ENCODE measurements at regions of chr1 and their contacts with region 1.

Region 1: DNA sequence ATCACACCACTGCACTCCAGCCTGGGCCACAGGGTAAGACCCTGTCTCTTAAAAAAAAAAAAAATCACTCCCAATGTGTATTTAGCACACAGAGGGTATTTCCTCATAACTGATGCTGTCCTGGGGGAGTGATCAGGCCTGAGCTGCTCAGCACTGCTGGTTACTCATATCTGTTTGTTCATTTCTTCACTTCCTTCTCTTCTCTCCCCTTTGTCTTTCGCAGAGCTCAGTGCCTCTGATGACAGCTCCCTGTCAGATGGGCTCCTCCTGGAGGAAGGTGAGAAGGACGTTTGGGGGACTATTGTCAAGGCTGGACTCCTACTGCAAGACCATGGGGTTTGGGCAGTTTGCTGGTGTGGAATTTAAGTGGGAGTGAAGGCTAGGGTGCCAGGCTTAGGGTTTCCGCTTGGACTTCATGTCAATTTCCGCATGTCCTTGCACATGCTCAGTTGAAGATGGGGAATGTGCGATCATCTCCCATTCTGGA is 13.0 kb downstream of the INAVA start:
- DNase-seq: no peak
- H3K4me3 Mint-ChIP-seq: no peak overlapping the region
- H3K27ac Mint-ChIP-seq: no peak overlapping the region
- H3K4me1 Mint-ChIP-seq: peaks cover 10% of the 10 kb centered on the region
- H3K27me3 Mint-ChIP-seq: peaks cover 29% of the 10 kb centered on the region

Region 2: GRCh38 chr1:200866521-200866920 is 41.1 kb before region 1 on chr1:
- intact Hi-C with region 1: loop called (anchors 5 kb)
- DNase-seq: no peak
- H3K4me3 Mint-ChIP-seq: no peak overlapping the region
- H3K27ac Mint-ChIP-seq: no peak overlapping the region
- H3K4me1 Mint-ChIP-seq: peaks cover 41% of the 10 kb centered on the region
- H3K27me3 Mint-ChIP-seq: peaks cover 37% of the 10 kb centered on the region

Region 3: DNA sequence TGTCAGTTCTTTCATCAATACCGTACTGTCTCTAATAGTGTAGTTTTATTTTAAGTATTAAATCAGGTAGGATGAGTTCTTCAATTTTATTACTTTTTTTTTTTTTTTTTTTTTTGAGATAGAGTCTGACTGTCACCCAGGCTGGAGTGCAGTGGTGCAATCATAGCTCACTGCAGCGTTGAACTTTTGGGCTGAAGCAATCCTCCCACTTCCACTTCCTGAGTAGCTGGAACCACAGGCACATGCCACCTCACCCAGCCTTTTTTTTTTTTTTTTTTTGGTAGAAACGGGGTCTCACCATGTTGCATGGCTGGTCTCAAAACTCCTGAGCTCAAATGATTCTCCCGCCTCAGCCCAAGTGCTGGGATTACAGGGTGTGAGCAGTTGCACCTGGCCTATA is 31.3 kb after region 1 on chr1:
- intact Hi-C with region 1: loop called (anchors 5 kb)
- DNase-seq: no peak
- H3K4me3 Mint-ChIP-seq: no peak overlapping the region
- H3K27ac Mint-ChIP-seq: no peak overlapping the region
- H3K4me1 Mint-ChIP-seq: no peaks in the 10 kb centered on the region
- H3K27me3 Mint-ChIP-seq: peaks cover 22% of the 10 kb centered on the region

Region 4: GRCh38 chr1:201399352-201400126 is 491.9 kb after region 1 on chr1:
- intact Hi-C with region 1: no loop called
- DNase-seq: no peak
- H3K4me3 Mint-ChIP-seq: no peak overlapping the region
- H3K27ac Mint-ChIP-seq: no peak overlapping the region
- H3K4me1 Mint-ChIP-seq: no peaks in the 10 kb centered on the region
- H3K27me3 Mint-ChIP-seq: peaks cover 30% of the 10 kb centered on the region

Measured in activated T-helper 1 cell treated with anti-CD3 and anti-CD28 coated beads, Interleukin-12 subunit alpha, Interleukin-12 subunit beta, Interleukin-2, Interleukin-4 antibody, amounts not matched to agents 30 ng/mL and 10 ng/mL and 1 ng/mL, durations not matched to agents 14 hours and 24 hours and 36 hours (primary cell).